Heart left ventricle (tissue), 16 donors: ENCODE measurements at regions of chr9 and their contacts with region 1.

Region 1: DNA sequence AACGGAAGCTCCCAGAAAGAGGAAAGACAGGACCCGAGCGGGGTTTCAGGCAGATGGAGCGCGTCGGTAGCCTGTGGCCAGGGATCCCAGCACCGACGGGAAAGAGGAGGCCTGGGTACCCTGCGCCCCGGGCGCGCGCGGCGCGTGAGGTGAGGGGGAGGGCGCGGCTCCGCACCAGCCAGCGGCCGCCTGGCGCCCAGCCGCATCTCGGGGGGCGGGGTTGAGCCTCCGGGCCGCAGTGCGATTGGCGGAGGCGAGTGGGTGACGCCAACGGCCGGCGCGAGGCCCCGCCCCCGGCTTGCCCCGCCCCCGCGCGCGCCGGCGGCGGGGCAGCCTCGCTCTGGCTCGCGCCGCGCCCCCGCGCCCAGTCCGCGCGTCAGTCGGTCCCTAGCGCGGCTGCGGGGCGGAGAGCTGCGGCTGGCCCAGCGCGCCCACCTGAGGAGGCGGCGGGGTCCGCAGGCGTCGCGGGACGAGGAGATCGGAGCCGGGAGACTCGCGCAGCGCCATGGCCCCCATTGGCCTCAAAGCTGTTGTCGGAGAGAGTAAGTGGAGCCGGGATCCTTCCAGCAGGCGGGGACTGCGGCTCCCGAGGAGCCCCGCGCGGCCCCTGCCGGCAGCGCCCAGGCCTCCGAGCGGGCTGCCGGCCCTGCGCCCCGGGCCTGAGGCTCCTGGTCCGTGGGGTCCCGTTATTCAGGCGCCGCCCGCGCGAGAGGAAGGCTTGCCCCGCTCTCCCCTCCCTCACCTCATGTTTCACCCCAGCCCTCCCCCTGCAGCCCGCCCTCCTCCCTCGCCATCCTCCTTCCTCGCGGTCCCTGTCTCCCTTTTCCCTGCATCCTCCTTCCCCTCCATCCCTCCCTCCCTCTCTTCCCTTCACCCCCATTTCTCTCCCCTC is at the start of gene STXBP1:
- DNase-seq: peak; percentile 90 to 95 (median 92)
- ATAC-seq: peak; percentile 71 to 90 (median 86)
- H3K4me3 ChIP-seq: peak within 1 kb of the TSS; percentile 68 to 99 (median 93)
- H3K27ac ChIP-seq: peak within 1 kb of the TSS; percentile 85 to 98 (median 94)
- H3K4me1 ChIP-seq: peaks cover 0 to 47% (median 35%) of the 10 kb centered on the region in 12 donors
- H3K27me3 ChIP-seq: peaks cover 0 to 5% (median 0%) of the 10 kb centered on the region in 9 donors
- CTCF ChIP-seq: peak in 6 of 12 donors; percentile 9 to 50 (median 27)
- POLR2A ChIP-seq: peak in 1 of 2 donors; percentile 91
- total RNA-seq, gene STXBP1: 35.9 to 102 (median 50.2) TPM

Region 2: GRCh38 chr9:127664667-127665507 is 52.7 kb after region 1 on chr9:
- intact Hi-C with region 1: loop called in 1 of 10 experiments (anchors 10 kb)
- DNase-seq: no peak
- ATAC-seq: peak in 2 of 4 donors; percentile 55 to 57
- H3K4me3 ChIP-seq: no peak overlapping the region
- H3K27ac ChIP-seq: peak overlapping the region in 3 of 12 donors; percentile 17 to 23 (median 21)
- H3K4me1 ChIP-seq: peaks cover 0 to 15% (median 0%) of the 10 kb centered on the region in 12 donors
- H3K27me3 ChIP-seq: no peaks in the 10 kb centered on the region
- CTCF ChIP-seq: no peak
- POLR2A ChIP-seq: no peak

Region 3: GRCh38 chr9:127676636-127677035 is 64.5 kb after region 1 on chr9:
- intact Hi-C with region 1: no loop called
- DNase-seq: no peak
- ATAC-seq: peak in 2 of 4 donors; percentile 85 to 86
- H3K4me3 ChIP-seq: no peak overlapping the region
- H3K27ac ChIP-seq: no peak overlapping the region
- H3K4me1 ChIP-seq: no peaks in the 10 kb centered on the region
- H3K27me3 ChIP-seq: no peaks in the 10 kb centered on the region
- CTCF ChIP-seq: no peak
- POLR2A ChIP-seq: no peak